Heart right ventricle (tissue), 16 donors: ENCODE measurements at regions of chr12 and their contacts with region 1.

Region 1: DNA sequence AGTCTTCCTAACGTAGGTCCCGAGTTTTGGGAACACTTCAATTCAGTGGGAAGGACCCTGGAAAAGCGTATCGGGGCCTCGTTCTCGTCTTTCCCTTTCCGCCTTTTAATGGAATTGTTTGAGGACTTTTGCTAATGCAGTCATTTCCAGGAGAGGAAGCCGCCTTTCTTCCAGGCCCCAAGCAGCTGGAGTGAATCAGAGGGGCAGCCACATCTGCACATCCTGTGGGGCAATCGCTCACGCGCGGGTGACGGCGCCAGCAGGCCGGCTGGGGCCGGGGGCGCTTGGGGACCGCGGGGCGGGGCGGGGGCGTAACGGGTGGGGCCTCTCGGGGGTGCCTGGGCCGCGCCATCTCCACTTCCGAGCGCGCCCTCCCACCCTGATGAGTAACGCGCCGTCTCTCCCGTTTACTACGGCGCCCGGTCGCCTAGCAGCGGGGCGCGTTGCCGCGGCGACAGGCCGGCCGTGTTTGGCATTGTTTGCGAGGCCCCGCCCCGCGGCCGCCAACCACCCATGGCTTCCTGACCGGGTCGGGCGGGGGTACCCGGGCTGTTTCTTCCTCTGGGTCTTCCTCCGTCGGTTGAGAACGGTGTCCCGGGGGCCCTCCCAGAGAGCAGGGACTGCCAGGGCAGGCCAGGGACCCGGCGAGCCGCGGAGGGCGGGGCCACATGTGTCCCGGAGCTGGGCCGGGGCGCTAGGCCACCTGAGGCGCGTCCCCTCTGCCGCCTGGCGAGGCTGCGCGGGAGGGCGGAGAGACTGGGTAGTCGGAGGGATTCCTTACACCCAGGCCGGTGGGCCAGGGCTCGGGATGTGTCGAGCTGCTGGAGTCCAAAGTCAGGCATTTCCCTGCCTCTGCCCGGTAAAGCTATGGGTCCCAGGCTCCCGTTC is 2.3 kb downstream of the GSG1 start:
- DNase-seq: peak; percentile 90 to 91
- ATAC-seq: peak; percentile 75 to 95 (median 84)
- H3K4me3 ChIP-seq: peak overlapping the region; percentile 29 to 67 (median 60)
- H3K27ac ChIP-seq: peak overlapping the region; percentile 86 to 98 (median 96)
- H3K4me1 ChIP-seq: peaks cover 10 to 69% (median 50%) of the 10 kb centered on the region in 9 donors
- H3K27me3 ChIP-seq: no peaks in the 10 kb centered on the region
- CTCF ChIP-seq: peak in 1 of 9 donors; percentile 9

Region 2: DNA sequence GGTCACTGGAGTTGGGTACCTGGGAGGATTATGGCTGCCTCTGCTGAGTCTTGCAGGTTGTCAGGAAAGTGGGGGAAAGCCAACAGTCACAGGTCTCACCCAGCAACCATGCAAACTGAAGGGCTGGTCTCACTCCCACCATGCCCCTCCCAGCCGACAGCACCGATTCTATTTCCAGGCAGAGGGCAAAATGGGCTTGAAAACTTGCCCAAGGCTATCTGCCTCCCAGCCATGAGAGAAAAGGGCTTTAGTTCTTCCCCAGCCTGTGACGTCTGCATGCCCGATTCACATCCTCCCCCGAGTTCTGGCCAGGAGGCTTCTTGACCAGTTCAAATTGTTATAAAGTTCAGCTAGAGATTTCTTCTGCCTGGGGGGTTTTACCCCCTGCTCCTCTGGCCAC is 1956.8 kb before region 1 on chr12:
- intact Hi-C with region 1: no loop called
- DNase-seq: no peak
- ATAC-seq: no peak
- H3K4me3 ChIP-seq: no peak overlapping the region
- H3K27ac ChIP-seq: no peak overlapping the region
- H3K4me1 ChIP-seq: no peaks in the 10 kb centered on the region
- H3K27me3 ChIP-seq: no peaks in the 10 kb centered on the region
- CTCF ChIP-seq: no peak

Region 3: DNA sequence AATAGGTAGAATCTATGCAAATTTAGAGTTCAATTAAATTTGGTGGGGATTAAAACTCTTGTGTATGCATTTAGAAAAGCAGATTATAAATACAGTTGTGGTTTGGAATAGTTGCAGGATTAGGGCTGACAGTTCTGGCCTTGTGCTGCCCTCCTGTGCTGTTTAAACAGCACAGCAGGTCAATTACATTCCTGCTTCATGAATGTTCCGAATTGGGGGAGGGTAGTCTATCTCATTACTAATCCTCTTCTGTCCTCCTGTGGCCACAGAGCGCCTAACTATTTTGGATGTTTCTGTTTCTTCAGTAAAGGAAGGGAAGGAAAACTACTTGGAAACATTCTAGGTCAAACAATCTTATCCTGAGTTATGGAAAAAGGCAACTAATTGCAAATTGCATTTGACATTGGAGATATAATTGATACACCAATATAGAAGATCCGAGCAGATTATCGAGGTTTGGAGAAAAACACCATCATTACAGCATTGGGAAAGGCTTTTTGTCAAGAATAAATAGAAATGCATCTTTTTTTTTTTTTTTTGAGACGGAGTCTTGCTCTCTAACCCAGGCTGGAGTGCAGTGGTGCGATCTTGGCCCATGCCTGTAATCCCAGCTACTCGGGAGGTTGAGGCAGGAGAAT is 396.4 kb before region 1 on chr12:
- intact Hi-C with region 1: no loop called
- DNase-seq: peak in 1 of 2 donors; percentile 63
- ATAC-seq: peak; percentile 94 to 99 (median 98)
- H3K4me3 ChIP-seq: no peak overlapping the region
- H3K27ac ChIP-seq: peak overlapping the region in 1 of 10 donors; percentile 15
- H3K4me1 ChIP-seq: peaks cover 0 to 11% (median 3%) of the 10 kb centered on the region in 9 donors
- H3K27me3 ChIP-seq: no peaks in the 10 kb centered on the region
- CTCF ChIP-seq: peak; percentile 58 to 95 (median 82)

Region 4: DNA sequence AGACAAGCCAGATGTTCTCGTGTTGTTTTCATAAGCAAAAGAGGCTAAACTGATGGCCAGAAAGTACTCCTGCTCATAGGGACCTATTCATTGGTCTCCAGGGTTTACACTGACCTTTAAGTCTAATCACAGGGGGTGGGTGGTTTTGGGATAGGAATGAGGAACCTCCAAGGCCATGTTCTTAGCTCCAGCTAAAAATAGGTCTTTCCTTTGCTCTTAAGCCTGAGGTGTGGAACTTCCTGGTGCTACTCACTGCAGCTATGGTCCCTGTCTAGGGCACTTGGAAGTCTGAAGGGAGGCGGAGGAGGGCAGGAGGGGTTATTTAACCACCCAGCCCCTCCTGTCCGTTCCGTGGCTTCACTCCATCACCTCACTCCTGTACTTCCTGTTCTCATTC is 191.1 kb before region 1 on chr12:
- intact Hi-C with region 1: loop called in 3 of 10 experiments (anchors 5 to 10 kb)
- DNase-seq: no peak
- ATAC-seq: peak; percentile 43 to 93 (median 66)
- H3K4me3 ChIP-seq: no peak overlapping the region
- H3K27ac ChIP-seq: peak overlapping the region in 8 of 10 donors; percentile 25 to 57 (median 47)
- H3K4me1 ChIP-seq: peaks cover 0 to 19% (median 15%) of the 10 kb centered on the region in 9 donors
- H3K27me3 ChIP-seq: peaks cover 0 to 3% (median 0%) of the 10 kb centered on the region in 7 donors
- CTCF ChIP-seq: no peak

Region 5: DNA sequence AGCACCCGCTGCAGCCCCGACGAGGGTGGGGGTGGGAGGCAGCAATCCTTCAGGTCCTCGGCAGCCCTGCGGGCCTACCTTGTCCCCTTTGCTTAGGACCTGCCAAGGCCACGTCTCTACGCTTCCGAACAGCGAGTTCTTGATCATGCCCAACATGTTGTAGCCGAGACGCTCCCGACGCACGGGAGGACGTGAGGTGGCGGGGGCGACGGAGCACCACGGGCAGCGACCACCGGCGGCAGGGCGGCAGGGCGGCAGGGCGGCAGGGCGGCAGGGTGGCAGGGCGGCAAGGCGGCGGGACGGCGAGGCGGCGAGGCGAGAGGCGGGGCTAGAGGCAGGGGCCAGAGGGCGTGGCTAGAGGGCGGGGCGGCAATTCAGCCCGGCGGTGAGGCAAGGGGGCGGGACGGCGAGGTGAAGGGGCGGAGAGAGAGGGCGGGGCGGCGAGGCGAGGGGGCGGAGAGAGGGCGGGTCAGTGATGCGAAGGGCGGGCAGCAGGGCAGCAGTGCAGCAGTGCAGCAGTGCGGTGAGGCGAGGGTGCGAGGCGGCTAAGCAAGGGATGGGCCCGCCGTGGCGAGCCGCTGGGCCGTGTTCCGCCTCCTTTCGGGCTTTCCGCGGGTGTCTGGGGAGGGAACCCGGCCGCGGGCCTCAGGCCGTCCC is 101.0 kb before region 1 on chr12 and contains the start of gene HEBP1:
- intact Hi-C with region 1: loop called in 4 of 10 experiments (anchors 5 kb)
- DNase-seq: peak; percentile 96 to 98
- ATAC-seq: peak; percentile 96 to 99 (median 98)
- H3K4me3 ChIP-seq: peak within 1 kb of the TSS; percentile 58 to 98 (median 86)
- H3K27ac ChIP-seq: peak within 1 kb of the TSS; percentile 78 to 99 (median 92)
- H3K4me1 ChIP-seq: peaks cover 5 to 64% (median 43%) of the 10 kb centered on the region in 9 donors
- H3K27me3 ChIP-seq: no peaks in the 10 kb centered on the region
- CTCF ChIP-seq: no peak
- total RNA-seq, gene HEBP1: 45.2 to 71.4 (median 51.4) TPM

Region 6: GRCh38 chr12:13135371-13136178 is 34.4 kb after region 1 on chr12:
- intact Hi-C with region 1: no loop called
- DNase-seq: no peak
- ATAC-seq: peak in 4 of 8 donors; percentile 17 to 80 (median 35)
- H3K4me3 ChIP-seq: no peak overlapping the region
- H3K27ac ChIP-seq: no peak overlapping the region
- H3K4me1 ChIP-seq: no peaks in the 10 kb centered on the region
- H3K27me3 ChIP-seq: no peaks in the 10 kb centered on the region
- CTCF ChIP-seq: no peak

Region 7: GRCh38 chr12:13148064-13148847 is 47.1 kb after region 1 on chr12:
- intact Hi-C with region 1: loop called in 3 of 10 experiments (anchors 2 to 5 kb)
- DNase-seq: no peak
- ATAC-seq: peak in 1 of 8 donors; percentile 24
- H3K4me3 ChIP-seq: no peak overlapping the region
- H3K27ac ChIP-seq: peak overlapping the region in 8 of 10 donors; percentile 7 to 66 (median 50)
- H3K4me1 ChIP-seq: peaks cover 0 to 60% (median 30%) of the 10 kb centered on the region in 9 donors
- H3K27me3 ChIP-seq: no peaks in the 10 kb centered on the region
- CTCF ChIP-seq: no peak

Region 8: DNA sequence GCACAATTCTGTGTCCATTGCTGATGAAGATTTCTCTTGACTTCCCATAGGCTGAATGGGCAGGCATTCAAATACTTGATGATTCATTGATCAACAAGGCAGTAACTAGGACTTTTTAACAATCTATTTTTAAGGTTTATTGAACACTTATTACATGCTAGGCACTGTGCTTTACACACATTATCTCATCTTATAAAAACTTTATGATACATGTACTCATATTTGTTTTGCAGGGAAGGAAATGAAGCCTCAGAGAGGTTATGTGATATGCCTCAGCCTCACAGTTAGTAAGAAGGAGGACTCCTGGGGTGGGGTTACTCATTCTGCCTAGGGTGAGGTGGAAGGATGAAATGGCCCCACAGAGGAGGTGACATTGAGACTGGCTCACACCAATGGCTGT is 82.5 kb after region 1 on chr12:
- intact Hi-C with region 1: no loop called
- DNase-seq: no peak
- ATAC-seq: no peak
- H3K4me3 ChIP-seq: no peak overlapping the region
- H3K27ac ChIP-seq: no peak overlapping the region
- H3K4me1 ChIP-seq: peaks cover 10 to 17% (median 15%) of the 10 kb centered on the region in 9 donors
- H3K27me3 ChIP-seq: peaks cover 0 to 13% (median 0%) of the 10 kb centered on the region in 7 donors
- CTCF ChIP-seq: no peak

Region 9: GRCh38 chr12:13196130-13196921 is 95.2 kb after region 1 on chr12 and contains the start of gene EMP1:
- intact Hi-C with region 1: loop called in 6 of 10 experiments (anchors 1 to 5 kb)
- DNase-seq: peak; percentile 79 to 96
- ATAC-seq: peak; percentile 83 to 93 (median 87)
- H3K4me3 ChIP-seq: peak within 1 kb of the TSS; percentile 53 to 71 (median 65)
- H3K27ac ChIP-seq: peak within 1 kb of the TSS; percentile 87 to 97 (median 92)
- H3K4me1 ChIP-seq: peaks cover 7 to 82% (median 41%) of the 10 kb centered on the region in 9 donors
- H3K27me3 ChIP-seq: no peaks in the 10 kb centered on the region
- CTCF ChIP-seq: no peak
- total RNA-seq, gene EMP1: 74.6 to 403 (median 98.5) TPM

Region 10: GRCh38 chr12:13211859-13212664 is 110.9 kb after region 1 on chr12:
- intact Hi-C with region 1: loop called in 8 of 10 experiments (anchors 2 to 5 kb)
- DNase-seq: peak in 1 of 2 donors; percentile 65
- ATAC-seq: peak in 2 of 8 donors; percentile 24 to 52
- H3K4me3 ChIP-seq: no peak overlapping the region
- H3K27ac ChIP-seq: peak overlapping the region in 1 of 10 donors; percentile 34
- H3K4me1 ChIP-seq: peaks cover 11 to 51% (median 47%) of the 10 kb centered on the region in 9 donors
- H3K27me3 ChIP-seq: no peaks in the 10 kb centered on the region
- CTCF ChIP-seq: peak; percentile 57 to 83 (median 79)